ENCODE measurements at regions of chr7 and their contacts with region 1.

Region 1: DNA sequence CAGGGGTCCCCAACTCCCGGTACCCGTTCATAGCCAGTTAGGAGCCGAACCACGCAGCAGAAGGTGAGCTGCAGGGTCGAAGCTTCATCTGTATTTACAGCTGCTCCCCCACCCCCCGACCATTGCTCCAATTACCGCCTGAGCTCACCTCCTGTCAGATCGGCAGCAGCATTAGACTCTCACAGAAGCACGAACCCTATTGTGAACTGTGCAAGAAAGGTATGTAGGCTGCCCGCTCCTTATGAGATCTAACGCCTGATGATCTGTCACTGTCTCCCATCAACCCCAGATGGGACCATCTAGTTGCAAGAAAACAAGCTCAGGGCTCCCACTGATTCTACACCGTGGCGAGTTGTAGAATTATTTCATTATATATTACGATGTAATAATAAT is 14.6 kb upstream of the AZGP1 start:
- DNase-seq: no peak
- ATAC-seq: no peak

Region 2: GRCh38 chr7:99910976-99911375 is 79.5 kb before region 1 on chr7:
- intact Hi-C with region 1: loop called (anchors 2 kb)
- DNase-seq: no peak
- ATAC-seq: no peak

Region 3: DNA sequence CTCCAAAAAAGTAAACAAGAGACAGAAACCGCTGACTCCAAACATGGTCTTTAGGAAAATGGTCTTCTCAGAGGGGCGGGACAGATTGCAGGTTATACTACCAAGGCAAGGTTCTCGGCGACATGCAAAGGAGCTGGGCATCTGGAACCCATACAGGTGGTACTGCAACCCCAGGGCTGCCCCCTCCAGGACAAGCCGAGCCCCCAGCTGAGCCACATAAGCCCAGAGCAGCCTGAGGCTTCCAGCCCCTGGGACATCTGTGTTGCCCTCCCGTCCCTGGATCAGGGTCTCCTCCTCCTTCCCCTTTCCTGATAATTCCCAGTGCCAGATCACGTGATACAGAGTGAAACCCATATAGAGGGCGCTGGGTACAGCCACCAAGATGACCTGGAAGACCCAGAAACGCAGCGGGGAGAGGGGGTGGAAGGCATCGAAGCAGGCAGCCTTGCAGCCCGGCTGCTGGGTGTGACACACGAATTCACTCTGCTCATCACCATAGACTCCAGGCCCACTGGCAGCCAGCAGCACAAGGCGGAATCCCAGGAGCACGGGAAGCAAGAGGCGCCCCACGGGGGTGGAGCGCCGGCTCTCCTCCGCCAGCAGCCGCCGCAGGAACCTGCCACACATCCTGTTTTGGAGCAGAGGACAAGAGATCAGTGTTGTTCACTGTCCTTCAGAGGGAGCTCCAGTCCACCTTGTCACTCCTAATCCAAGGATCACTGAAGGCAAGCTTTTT is 61.3 kb before region 1 on chr7 and contains the start of gene GJC3:
- intact Hi-C with region 1: loop called (anchors 2 kb)
- DNase-seq: peak; percentile 73
- ATAC-seq: peak; percentile 89
- total RNA-seq, gene GJC3: 0.30 TPM

Region 4: DNA sequence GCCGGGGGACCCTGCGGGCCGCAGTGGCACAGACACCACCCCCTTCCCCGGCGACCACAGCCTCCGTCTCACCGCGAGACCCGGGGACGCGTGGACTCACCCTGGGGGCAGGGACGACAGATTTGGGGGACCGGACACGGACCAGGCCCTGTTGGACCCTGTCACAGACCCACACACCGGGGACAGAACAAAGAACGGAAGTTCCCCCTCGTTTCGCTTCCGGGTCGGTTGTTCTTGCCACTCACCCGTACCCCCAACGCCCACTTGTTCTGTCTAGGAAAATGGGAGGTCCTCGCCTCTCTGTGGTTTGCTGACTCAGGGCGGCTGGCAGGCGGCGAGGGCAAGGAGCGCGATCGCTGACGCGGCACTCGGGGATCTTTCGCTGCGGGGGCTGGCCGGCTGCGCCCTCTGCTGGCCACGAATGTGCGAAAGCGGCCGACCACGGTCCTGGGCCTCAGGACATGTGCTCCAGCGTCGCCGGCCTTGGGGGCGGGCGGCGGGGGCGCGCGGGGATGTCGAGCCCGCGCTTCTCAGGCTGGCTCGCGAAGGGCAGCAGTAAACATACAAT is 91.2 kb after region 1 on chr7 and contains the start of gene ZNF3:
- intact Hi-C with region 1: loop called (anchors 5 kb)
- DNase-seq: peak; percentile 98
- ATAC-seq: peak; percentile 97
- total RNA-seq, gene ZNF3: 14.6 TPM

Region 5: DNA sequence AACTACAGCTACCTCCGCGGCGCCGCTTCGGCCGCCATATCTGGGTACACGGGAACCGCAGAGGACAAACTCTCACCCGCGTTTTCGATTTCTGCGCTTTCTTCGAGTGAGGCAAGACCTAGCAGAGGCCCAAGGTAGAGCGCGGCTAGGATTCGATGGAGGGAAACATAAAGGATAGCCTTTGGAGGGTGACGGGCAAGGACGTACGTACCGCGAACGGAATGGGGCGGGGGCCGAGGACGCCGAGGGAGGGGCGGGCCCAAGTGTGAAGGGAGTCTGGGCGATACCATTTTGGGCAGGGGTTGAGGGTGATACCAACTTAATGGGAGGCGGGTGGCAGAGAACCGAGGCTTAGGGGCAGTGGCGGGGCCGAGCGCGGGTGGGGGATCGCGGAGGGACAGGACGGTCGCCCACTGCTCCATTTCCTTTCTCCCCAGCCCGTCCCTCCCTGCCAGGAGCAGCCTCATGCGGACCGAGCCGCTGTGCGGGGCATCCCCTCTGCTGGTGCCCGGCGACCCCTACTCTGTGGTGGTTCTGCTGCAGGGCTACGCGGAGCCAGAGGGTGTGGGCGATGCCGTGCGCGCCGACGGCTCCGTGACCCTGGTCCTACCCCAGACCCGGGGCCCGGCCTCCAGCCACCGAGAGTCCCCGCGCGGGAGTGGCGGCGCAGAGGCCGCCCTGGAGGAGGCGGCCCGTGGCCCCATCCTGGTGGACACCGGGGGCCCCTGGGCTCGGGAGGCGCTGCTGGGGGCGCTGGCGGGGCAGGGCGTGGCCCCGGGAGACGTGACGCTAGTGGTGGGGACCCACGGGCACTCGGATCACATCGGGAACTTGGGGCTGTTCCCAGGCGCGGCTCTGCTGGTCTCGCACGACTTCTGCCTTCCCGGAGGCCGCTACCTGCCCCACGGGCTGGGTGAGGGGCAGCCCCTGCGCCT is 136.7 kb after region 1 on chr7 and contains the start of gene MBLAC1:
- intact Hi-C with region 1: loop called (anchors 5 kb)
- DNase-seq: peak; percentile 92
- ATAC-seq: peak; percentile 95
- total RNA-seq, gene MBLAC1: 2.1 TPM